ENCODE measurements at regions of chr19 and their contacts with region 1.

Region 1: GRCh38 chr19:20051841-20052768 is 12.8 kb upstream of the ZNF682 start:
- DNase-seq: peak; percentile 71
- H3K4me3 Mint-ChIP-seq: peak overlapping the region; percentile 58
- H3K27ac Mint-ChIP-seq: no peak overlapping the region
- H3K4me1 Mint-ChIP-seq: no peaks in the 10 kb centered on the region
- H3K27me3 Mint-ChIP-seq: no peaks in the 10 kb centered on the region
- CTCF ChIP-seq: no peak

Region 2: GRCh38 chr19:20077791-20078463 is 25.8 kb after region 1 on chr19 and contains the start of gene ZNF90:
- CTCF ChIA-PET with region 1: no interaction called
- intact Hi-C with region 1: loop called (anchors 1 kb)
- DNase-seq: peak; percentile 74
- H3K4me3 Mint-ChIP-seq: peak within 1 kb of the TSS; percentile 68
- H3K27ac Mint-ChIP-seq: no peak within 1 kb of the TSS
- H3K4me1 Mint-ChIP-seq: no peaks in the 10 kb centered on the region
- H3K27me3 Mint-ChIP-seq: no peaks in the 10 kb centered on the region
- CTCF ChIP-seq: no peak
- total RNA-seq, gene ZNF90: 5.3 and 6.2 TPM in 2 replicates

Region 3: GRCh38 chr19:20237761-20238623 is 185.9 kb after region 1 on chr19:
- CTCF ChIA-PET with region 1: no interaction called
- intact Hi-C with region 1: no loop called
- DNase-seq: peak; percentile 32
- H3K4me3 Mint-ChIP-seq: peak overlapping the region; percentile 57
- H3K27ac Mint-ChIP-seq: no peak overlapping the region
- H3K4me1 Mint-ChIP-seq: no peaks in the 10 kb centered on the region
- H3K27me3 Mint-ChIP-seq: no peaks in the 10 kb centered on the region
- CTCF ChIP-seq: no peak

Measured in Calu3 (cell line).